ENCODE measurements at regions of chr1 and their contacts with region 1.

Region 1: GRCh38 chr1:204494281-204495077 is at the start of gene PIK3C2B:
- DNase-seq: peak; percentile 70 to 84 (median 75)
- H3K4me3 ChIP-seq: peak within 1 kb of the TSS; percentile 62 to 99
- H3K4me3 Mint-ChIP-seq: peak within 1 kb of the TSS; percentile 90 to 99 (median 96)
- H3K27ac ChIP-seq: peak within 1 kb of the TSS; percentile 90
- H3K27ac Mint-ChIP-seq: peak within 1 kb of the TSS; percentile 90 to 99 (median 97)
- H3K4me1 ChIP-seq: peaks cover 47% of the 10 kb centered on the region
- H3K4me1 Mint-ChIP-seq: peaks cover 35 to 72% (median 45%) of the 10 kb centered on the region in 4 donors
- H3K27me3 ChIP-seq: no peaks in the 10 kb centered on the region
- H3K27me3 Mint-ChIP-seq: no peaks in the 10 kb centered on the region
- total RNA-seq, gene PIK3C2B: 43.4 to 46.9 TPM

Region 2: GRCh38 chr1:204411451-204412204 is 82.9 kb before region 1 on chr1 and contains the start of gene PPP1R15B:
- CTCF ChIA-PET with region 1: no interaction called
- POLR2A ChIA-PET with region 1: interaction called, 13 read pairs
- intact Hi-C with region 1: loop called (anchors 1 kb)
- DNase-seq: peak; percentile 98 to 99 (median 98)
- H3K4me3 ChIP-seq: peak within 1 kb of the TSS; percentile 67 to 99
- H3K4me3 Mint-ChIP-seq: peak within 1 kb of the TSS; percentile 98 to 99 (median 99)
- H3K27ac ChIP-seq: peak within 1 kb of the TSS; percentile 100
- H3K27ac Mint-ChIP-seq: peak within 1 kb of the TSS; percentile 99 to 100 (median 100)
- H3K4me1 ChIP-seq: peaks cover 7% of the 10 kb centered on the region
- H3K4me1 Mint-ChIP-seq: peaks cover 8 to 21% (median 13%) of the 10 kb centered on the region in 4 donors
- H3K27me3 ChIP-seq: no peaks in the 10 kb centered on the region
- H3K27me3 Mint-ChIP-seq: no peaks in the 10 kb centered on the region
- total RNA-seq, gene PPP1R15B: 78.0 to 81.1 TPM

Region 3: DNA sequence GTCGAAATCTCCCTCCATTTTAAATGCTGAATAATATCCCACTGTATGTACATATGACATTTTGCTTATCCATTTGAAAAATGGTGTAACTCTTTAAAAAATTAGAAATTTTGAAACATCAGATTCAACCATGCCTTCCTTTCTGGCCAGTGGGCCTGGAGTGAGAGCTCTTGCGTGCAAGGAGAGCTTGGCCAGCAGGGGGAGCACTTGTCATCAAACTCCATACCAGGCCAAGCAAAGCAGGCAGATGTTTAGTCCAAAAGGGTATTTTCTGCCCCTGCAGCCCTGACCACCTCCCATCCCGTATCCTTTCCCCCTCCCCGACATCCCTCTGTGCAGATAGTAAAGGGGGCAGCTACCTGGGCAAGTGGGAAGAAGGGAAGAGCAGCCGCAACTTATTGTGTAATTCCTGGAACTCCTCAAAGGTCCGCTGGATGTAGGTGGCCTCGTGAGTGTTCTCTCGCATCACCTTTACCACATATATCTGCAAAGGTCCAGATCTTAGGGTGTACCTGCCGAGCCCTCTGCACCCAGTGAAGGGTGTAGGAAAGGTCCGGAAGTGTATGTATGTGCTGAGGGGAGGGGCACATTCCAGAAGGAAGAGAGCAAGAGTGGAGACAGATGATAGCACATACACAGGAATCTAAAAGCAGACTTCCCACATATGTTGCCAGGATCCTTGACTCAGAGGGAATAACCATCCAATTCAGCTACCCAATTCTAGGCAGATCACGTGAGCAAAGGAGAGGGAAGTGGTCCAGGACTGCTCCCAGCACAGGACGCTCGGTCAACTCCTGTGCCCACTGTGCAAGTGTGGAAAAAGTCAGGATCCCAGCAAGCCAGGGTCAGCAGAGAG is 62.9 kb before region 1 on chr1:
- CTCF ChIA-PET with region 1: interaction called, 1,077 read pairs
- POLR2A ChIA-PET with region 1: interaction called, 5 read pairs
- intact Hi-C with region 1: loop called (anchors 2 kb)
- DNase-seq: peak; percentile 68 to 75 (median 71)
- H3K4me3 ChIP-seq: no peak overlapping the region
- H3K4me3 Mint-ChIP-seq: no peak overlapping the region
- H3K27ac ChIP-seq: no peak overlapping the region
- H3K27ac Mint-ChIP-seq: peak overlapping the region in 6 of 7 donors; percentile 8 to 78 (median 71)
- H3K4me1 ChIP-seq: no peaks in the 10 kb centered on the region
- H3K4me1 Mint-ChIP-seq: peaks cover 0 to 9% (median 6%) of the 10 kb centered on the region in 4 donors
- H3K27me3 ChIP-seq: no peaks in the 10 kb centered on the region
- H3K27me3 Mint-ChIP-seq: no peaks in the 10 kb centered on the region

Region 4: GRCh38 chr1:204453141-204453772 is 41.2 kb before region 1 on chr1:
- CTCF ChIA-PET with region 1: interaction called, 1,077 read pairs
- POLR2A ChIA-PET with region 1: interaction called, 136 read pairs
- intact Hi-C with region 1: loop called (anchors 1 kb)
- DNase-seq: peak; percentile 79 to 96 (median 88)
- H3K4me3 ChIP-seq: peak overlapping the region in 1 of 2 donors; percentile 21
- H3K4me3 Mint-ChIP-seq: peak overlapping the region; percentile 63 to 81 (median 73)
- H3K27ac ChIP-seq: peak overlapping the region; percentile 76
- H3K27ac Mint-ChIP-seq: peak overlapping the region; percentile 86 to 98 (median 96)
- H3K4me1 ChIP-seq: peaks cover 48% of the 10 kb centered on the region
- H3K4me1 Mint-ChIP-seq: peaks cover 26 to 63% (median 43%) of the 10 kb centered on the region in 4 donors
- H3K27me3 ChIP-seq: no peaks in the 10 kb centered on the region
- H3K27me3 Mint-ChIP-seq: no peaks in the 10 kb centered on the region

Region 5: DNA sequence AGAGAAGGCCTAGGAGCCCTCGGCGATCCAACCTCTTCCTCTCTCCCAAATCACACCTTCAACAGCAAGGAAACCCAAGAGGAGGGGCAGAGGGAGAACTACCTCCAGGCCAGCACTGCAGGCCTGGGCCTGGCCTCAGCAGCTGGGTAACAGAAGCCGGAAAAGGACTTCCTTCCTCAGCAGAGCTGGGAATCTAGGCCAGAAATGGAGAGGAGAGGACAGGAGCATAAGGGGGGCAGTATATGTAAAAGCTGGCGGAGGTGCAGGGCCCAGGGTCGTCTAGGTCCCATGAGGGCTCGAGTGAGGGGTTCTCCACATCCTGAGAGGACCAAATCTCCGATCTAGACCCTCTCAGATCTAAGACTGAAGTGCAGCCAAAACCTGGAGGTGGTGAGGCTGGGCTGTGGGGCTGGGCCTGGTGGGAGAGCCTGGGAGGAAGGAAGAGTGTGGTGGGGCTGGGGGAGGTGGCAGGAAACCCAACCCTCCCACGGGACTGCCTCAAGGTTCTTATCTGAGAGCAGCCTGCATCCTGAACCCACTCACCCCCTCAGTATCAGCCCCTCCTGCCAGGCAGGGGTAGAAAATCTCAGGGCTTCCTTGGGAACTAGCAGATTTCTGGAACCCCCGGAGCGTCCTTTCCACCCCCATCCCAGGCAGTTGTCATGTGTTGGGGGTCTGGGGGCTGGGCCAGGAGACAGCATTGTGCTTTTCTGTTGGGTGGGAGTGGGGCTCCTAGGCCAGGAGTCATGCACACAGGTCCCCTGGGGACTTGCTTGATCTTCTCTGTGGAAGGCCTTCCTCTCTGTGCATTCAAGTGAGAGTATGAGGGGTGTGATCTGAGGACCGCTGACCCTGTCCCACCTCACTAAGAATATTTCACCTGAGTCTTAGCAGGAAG is 32.9 kb before region 1 on chr1:
- CTCF ChIA-PET with region 1: interaction called, 14 read pairs
- POLR2A ChIA-PET with region 1: interaction called, 23 read pairs
- intact Hi-C with region 1: no loop called
- DNase-seq: peak; percentile 29 to 71 (median 36)
- H3K4me3 ChIP-seq: no peak overlapping the region
- H3K4me3 Mint-ChIP-seq: peak overlapping the region; percentile 54 to 83 (median 78)
- H3K27ac ChIP-seq: peak overlapping the region; percentile 60
- H3K27ac Mint-ChIP-seq: peak overlapping the region; percentile 84 to 98 (median 95)
- H3K4me1 ChIP-seq: peaks cover 67% of the 10 kb centered on the region
- H3K4me1 Mint-ChIP-seq: peaks cover 47 to 71% (median 57%) of the 10 kb centered on the region in 4 donors
- H3K27me3 ChIP-seq: no peaks in the 10 kb centered on the region
- H3K27me3 Mint-ChIP-seq: no peaks in the 10 kb centered on the region

Region 6: DNA sequence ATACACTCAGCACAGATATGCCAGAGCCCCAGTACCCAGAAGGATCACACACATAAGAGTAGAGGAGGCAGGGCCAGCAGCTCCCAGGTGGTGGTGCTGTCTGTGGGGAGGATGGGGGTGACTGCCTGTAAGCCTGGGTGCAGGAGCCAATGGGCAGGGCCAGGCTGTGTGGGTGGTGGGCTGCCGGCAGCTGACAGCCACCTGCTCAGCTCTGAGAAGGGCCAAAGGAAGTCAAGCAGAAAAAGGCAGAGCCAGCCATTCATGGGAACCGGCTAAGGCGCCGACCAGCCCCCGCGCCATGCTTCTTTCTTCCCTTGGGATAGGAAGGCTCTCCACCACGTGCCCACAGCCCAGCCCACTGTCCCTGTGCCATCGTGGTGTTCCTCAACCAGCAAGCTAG is 14.0 kb before region 1 on chr1:
- CTCF ChIA-PET with region 1: interaction called, 8 read pairs
- POLR2A ChIA-PET with region 1: interaction called, 40 read pairs
- intact Hi-C with region 1: no loop called
- DNase-seq: no peak
- H3K4me3 ChIP-seq: no peak overlapping the region
- H3K4me3 Mint-ChIP-seq: peak overlapping the region in 1 of 8 donors; percentile 22
- H3K27ac ChIP-seq: no peak overlapping the region
- H3K27ac Mint-ChIP-seq: peak overlapping the region in 4 of 7 donors; percentile 19 to 77 (median 56)
- H3K4me1 ChIP-seq: peaks cover 55% of the 10 kb centered on the region
- H3K4me1 Mint-ChIP-seq: peaks cover 50 to 88% (median 64%) of the 10 kb centered on the region in 4 donors
- H3K27me3 ChIP-seq: no peaks in the 10 kb centered on the region
- H3K27me3 Mint-ChIP-seq: no peaks in the 10 kb centered on the region

Region 7: GRCh38 chr1:204516180-204516879 is 21.9 kb after region 1 on chr1 and contains the start of gene MDM4:
- CTCF ChIA-PET with region 1: interaction called, 8 read pairs
- POLR2A ChIA-PET with region 1: interaction called, 75 read pairs
- intact Hi-C with region 1: no loop called
- DNase-seq: peak; percentile 93 to 96 (median 94)
- H3K4me3 ChIP-seq: peak within 1 kb of the TSS; percentile 67 to 72
- H3K4me3 Mint-ChIP-seq: no peak within 1 kb of the TSS
- H3K27ac ChIP-seq: peak within 1 kb of the TSS; percentile 98
- H3K27ac Mint-ChIP-seq: peak within 1 kb of the TSS in 1 of 7 donors; percentile 71
- H3K4me1 ChIP-seq: peaks cover 89% of the 10 kb centered on the region
- H3K4me1 Mint-ChIP-seq: peaks cover 30 to 73% (median 38%) of the 10 kb centered on the region in 4 donors
- H3K27me3 ChIP-seq: no peaks in the 10 kb centered on the region
- H3K27me3 Mint-ChIP-seq: no peaks in the 10 kb centered on the region
- total RNA-seq, gene MDM4: 213 to 237 TPM